OCI-LY7 (cell line): ENCODE measurements at regions of chr6 and their contacts with region 1.

Region 1: DNA sequence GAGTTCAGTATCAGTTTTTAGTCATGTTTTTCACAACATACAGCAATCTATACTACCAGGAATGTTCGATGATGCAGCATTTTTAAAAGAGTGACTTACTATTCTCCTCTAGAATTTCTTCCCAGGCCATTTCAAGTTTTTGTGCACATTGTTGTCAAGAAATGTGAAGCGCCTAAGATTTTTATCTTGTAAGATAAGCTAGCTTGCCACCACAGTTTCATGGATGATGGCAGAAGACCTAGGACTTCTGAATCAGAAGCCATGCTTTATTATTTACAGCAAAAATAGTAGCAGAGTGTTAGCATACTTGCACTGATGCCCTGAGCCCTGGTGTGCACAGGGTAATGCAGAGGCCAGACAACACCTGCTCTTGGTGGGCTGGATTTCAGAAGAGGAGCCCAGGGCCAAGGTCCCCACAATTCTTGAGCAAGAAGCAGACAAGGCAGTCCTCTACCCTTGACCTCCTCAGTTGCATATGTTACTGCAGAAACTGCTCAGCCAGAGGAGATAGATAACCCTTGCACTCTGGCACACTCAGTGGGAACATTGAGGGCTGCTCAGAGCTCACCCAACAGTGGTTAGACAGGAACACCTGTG is 99.2 kb downstream of the QKI start:
- DNase-seq: no peak
- H3K4me3 ChIP-seq: no peak overlapping the region
- H3K27ac ChIP-seq: no peak overlapping the region
- H3K4me1 ChIP-seq: no peaks in the 10 kb centered on the region
- CTCF ChIP-seq: no peak

Region 2: DNA sequence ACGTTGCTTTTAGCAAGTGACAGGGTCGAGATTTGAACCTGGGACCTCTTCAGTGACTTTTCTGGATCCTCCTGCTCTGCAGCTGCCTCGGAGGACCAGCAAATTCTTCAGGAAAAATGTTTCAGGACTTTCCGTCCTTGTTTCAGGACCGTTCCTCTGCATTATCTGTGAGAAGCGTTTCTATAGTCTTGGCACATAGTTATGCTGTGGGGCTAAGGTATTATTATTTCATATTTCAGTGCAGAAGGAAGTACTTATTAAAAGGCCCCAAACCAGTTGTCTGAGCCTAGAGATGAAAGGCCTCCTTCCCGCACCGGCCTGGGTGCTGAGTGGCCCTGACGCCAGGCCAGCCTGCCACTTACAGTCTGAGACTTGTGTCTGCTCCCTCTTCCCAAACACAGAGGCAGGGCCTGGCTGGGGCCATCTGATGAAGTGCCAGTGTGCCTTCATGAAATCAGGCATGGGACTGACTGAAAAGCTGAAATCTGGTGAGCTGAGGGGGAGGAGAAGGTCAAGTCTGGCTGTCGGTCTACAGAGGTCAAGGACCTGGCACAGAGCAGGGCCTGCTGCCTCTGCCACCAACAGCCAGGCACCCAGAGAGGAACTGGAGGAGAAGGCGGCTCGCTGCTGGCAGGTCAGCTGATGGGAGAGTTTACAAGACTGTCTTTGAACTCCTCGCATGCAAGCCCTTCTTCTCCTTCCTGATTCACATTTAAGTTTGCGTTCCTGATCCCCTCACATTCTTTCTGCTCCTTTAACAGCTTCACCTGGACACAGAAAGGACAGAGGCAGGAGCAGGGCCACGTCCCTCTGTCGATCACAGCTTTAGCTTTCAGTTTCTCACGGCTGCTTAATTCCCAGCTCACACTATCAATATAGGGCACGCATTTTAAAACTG is 108.0 kb before region 1 on chr6:
- CTCF ChIA-PET with region 1: no interaction called
- POLR2A ChIA-PET with region 1: no interaction called
- intact Hi-C with region 1: no loop called
- DNase-seq: no peak
- H3K4me3 ChIP-seq: no peak overlapping the region
- H3K27ac ChIP-seq: no peak overlapping the region
- H3K4me1 ChIP-seq: no peaks in the 10 kb centered on the region
- CTCF ChIP-seq: no peak

Region 3: DNA sequence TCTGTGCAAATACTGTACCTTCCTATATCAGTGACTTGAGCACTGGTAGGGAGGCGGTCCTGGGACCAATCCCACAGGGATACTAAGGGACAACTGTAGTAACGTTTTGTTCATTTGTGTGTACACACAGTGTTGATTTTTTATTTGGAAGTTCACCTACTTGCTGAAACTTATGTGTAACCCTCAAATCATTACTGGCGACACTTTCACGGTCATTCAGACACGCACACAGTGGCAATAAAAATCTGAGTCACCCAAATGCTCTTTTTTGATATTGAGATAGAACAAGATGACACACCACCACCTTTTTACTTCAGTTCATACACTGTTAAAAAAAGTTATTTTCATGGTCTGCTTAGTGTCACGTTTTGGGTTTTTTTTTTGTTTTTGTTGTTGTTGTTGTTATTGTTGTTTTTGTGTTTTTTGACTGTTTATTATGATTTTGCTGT is 19.4 kb before region 1 on chr6:
- CTCF ChIA-PET with region 1: no interaction called
- POLR2A ChIA-PET with region 1: no interaction called
- intact Hi-C with region 1: no loop called
- DNase-seq: no peak
- H3K4me3 ChIP-seq: no peak overlapping the region
- H3K27ac ChIP-seq: no peak overlapping the region
- H3K4me1 ChIP-seq: no peaks in the 10 kb centered on the region
- CTCF ChIP-seq: no peak

Region 4: DNA sequence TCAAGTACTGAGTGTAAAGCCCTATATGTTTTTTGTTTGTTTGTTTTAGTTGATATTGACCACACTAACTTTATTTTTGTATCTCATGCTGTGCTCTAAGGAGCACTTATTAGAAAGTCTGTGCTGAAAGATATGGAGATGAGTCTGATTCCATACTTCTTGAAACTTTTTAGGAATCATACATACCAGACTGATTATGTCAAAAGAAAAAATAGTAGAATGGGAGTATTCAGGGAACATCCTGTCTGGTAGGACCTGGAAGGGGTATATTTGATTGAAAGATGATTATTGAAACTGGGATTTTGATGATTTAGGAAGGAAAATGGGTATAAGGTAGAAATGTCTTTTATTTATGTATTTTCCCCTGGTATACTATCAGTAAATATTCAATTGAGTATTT is 12.3 kb after region 1 on chr6:
- CTCF ChIA-PET with region 1: no interaction called
- POLR2A ChIA-PET with region 1: interaction called, 10 read pairs
- intact Hi-C with region 1: no loop called
- DNase-seq: no peak
- H3K4me3 ChIP-seq: no peak overlapping the region
- H3K27ac ChIP-seq: no peak overlapping the region
- H3K4me1 ChIP-seq: no peaks in the 10 kb centered on the region
- CTCF ChIP-seq: no peak

Region 5: GRCh38 chr6:163565140-163565539 is 51.5 kb after region 1 on chr6:
- CTCF ChIA-PET with region 1: no interaction called
- POLR2A ChIA-PET with region 1: no interaction called
- intact Hi-C with region 1: no loop called
- DNase-seq: no peak
- H3K4me3 ChIP-seq: no peak overlapping the region
- H3K27ac ChIP-seq: no peak overlapping the region
- H3K4me1 ChIP-seq: no peaks in the 10 kb centered on the region
- CTCF ChIP-seq: no peak